ENCODE measurements at regions of chr21 and their contacts with region 1.

Region 1: GRCh38 chr21:29849735-29850176 is 90.0 kb downstream of the GRIK1 start:
- DNase-seq: peak in 8 of 9 experiments; percentile 3 to 55 (median 23)
- ATAC-seq: peak; percentile 90
- H3K4me3 ChIP-seq: no peak overlapping the region
- H3K4me3 Mint-ChIP-seq: no peak overlapping the region
- H3K27ac ChIP-seq: no peak overlapping the region
- H3K27ac Mint-ChIP-seq: no peak overlapping the region
- H3K4me1 ChIP-seq: no peaks in the 10 kb centered on the region
- H3K4me1 Mint-ChIP-seq: no peaks in the 10 kb centered on the region
- H3K27me3 ChIP-seq: no peaks in the 10 kb centered on the region
- H3K27me3 Mint-ChIP-seq: peaks cover 11% of the 10 kb centered on the region
- CTCF ChIP-seq: peak; percentile 67

Region 2: DNA sequence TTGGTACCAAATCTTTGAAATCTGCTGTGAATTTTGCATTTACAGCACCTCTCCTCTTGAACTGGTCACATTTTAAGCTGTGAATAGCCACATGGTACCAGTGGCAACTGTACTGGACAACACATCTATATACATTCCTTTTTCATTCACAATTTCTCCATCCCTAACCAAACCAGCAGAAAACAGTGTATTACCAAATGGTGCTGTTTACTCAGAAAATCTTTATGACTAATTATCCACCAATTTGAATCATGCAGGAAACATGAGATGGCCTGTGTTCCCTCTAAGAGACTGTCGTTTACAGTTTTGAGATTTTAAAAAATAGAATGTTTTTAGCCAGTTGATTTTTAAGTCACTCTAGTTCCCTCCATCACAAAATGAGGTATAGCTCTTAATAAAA is 758.7 kb before region 1 on chr21:
- CTCF ChIA-PET with region 1: interaction called, 9 read pairs
- POLR2A ChIA-PET with region 1: no interaction called
- intact Hi-C with region 1: loop called (anchors 1 kb)
- DNase-seq: no peak
- ATAC-seq: no peak
- H3K4me3 ChIP-seq: no peak overlapping the region
- H3K4me3 Mint-ChIP-seq: no peak overlapping the region
- H3K27ac ChIP-seq: no peak overlapping the region
- H3K27ac Mint-ChIP-seq: no peak overlapping the region
- H3K4me1 ChIP-seq: no peaks in the 10 kb centered on the region
- H3K4me1 Mint-ChIP-seq: no peaks in the 10 kb centered on the region
- H3K27me3 ChIP-seq: no peaks in the 10 kb centered on the region
- H3K27me3 Mint-ChIP-seq: no peaks in the 10 kb centered on the region
- CTCF ChIP-seq: no peak

Region 3: DNA sequence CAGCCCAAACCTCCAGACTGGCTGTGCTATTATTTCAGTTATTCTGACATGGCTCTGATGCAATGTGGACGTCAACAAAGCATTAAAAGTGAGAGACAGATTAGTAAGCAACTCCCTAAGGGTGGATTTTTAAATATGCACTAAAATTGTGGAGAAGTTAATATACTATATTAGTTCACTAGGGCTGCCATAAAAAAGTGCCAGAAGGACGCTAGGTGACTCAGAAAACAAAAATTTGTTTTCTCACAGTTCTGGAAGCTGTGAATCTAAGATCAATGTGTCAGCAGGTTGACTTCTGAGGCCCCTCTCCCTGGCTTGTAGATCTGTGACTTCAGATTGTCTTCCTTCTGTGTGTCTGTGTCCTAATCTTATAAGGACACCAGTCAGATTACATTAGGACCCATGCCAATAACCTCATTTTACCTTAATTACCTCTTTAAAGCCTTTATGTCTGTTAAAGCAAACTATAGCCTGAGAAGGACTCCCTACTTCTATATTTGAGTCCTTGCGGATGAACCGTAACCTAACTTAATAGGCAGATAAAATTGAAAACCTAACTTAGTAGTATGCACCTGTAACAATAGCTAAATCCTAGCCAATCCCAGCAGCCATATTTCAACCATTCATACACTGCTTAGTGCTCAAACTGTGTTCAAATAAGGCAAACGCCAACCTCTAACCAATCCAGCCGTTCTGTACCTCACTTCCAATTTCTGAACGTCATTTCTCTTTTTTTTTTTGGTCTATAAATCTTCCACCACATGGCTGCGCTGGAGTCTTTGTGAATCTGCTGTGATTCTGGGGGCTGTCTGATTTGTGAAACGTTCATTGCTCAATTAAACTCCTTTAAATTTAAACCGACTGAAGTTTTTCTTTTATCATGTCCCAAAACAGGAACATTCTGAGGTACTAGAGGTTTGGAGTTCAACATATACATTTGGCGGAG is 616.9 kb before region 1 on chr21:
- CTCF ChIA-PET with region 1: no interaction called
- POLR2A ChIA-PET with region 1: no interaction called
- intact Hi-C with region 1: loop called in 1 of 2 experiments (anchors 1 kb)
- DNase-seq: peak in 2 of 9 experiments; percentile 15 to 33
- ATAC-seq: no peak
- H3K4me3 ChIP-seq: no peak overlapping the region
- H3K4me3 Mint-ChIP-seq: no peak overlapping the region
- H3K27ac ChIP-seq: no peak overlapping the region
- H3K27ac Mint-ChIP-seq: no peak overlapping the region
- H3K4me1 ChIP-seq: no peaks in the 10 kb centered on the region
- H3K4me1 Mint-ChIP-seq: peaks cover 9% of the 10 kb centered on the region
- H3K27me3 ChIP-seq: no peaks in the 10 kb centered on the region
- H3K27me3 Mint-ChIP-seq: no peaks in the 10 kb centered on the region
- CTCF ChIP-seq: no peak

Region 4: GRCh38 chr21:29351691-29352090 is 498.1 kb before region 1 on chr21:
- CTCF ChIA-PET with region 1: interaction called, 3 read pairs
- POLR2A ChIA-PET with region 1: no interaction called
- intact Hi-C with region 1: loop called in 1 of 2 experiments (anchors 5 kb)
- DNase-seq: no peak
- ATAC-seq: no peak
- H3K4me3 ChIP-seq: no peak overlapping the region
- H3K4me3 Mint-ChIP-seq: no peak overlapping the region
- H3K27ac ChIP-seq: no peak overlapping the region
- H3K27ac Mint-ChIP-seq: no peak overlapping the region
- H3K4me1 ChIP-seq: peaks cover 8% of the 10 kb centered on the region
- H3K4me1 Mint-ChIP-seq: peaks cover 13% of the 10 kb centered on the region
- H3K27me3 ChIP-seq: no peaks in the 10 kb centered on the region
- H3K27me3 Mint-ChIP-seq: no peaks in the 10 kb centered on the region
- CTCF ChIP-seq: no peak

Region 5: DNA sequence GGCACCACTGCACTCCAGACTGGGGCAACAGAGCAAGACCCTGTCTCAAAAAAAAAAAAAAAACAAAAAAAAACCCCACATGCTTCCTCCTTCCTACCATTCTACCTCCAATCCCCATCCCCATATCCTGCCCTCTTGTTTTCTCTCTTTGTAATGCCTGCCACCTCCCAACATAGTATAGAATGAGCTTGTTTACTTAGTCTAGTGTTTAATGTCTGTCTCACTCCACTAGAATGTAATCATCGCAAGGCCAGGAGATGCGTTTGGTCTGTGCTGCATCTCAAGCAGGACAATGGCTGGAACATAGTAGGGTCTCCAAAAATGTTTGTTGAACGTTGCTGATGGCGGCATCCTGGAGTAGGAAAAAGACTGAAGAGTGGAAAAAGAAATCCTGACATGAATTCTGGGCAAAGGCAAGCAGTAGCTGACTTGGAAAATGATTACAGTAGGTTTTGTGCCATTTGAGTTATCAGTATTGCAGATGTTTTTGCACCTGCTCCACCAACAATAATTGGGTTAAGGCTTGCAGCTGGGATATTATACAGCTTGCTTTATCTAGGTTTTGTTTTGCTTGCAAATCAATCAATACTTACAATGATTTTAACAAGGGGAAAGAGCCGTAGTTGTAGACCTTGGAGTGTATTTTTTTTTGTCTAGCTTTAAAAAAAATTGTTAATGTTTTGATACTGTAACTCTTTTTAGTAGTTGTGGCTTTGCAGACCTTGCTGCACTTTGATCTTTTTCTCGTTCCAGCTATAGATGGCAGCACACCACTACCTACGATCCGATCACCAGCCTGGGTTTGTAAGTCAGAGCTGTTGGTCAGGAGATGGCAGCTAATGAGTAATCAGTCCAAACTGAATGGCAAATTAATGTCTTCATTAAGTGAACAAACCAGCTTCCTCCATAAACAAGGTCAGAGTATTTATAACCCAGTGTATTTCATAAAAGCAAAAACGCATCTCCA is 488.7 kb before region 1 on chr21:
- CTCF ChIA-PET with region 1: interaction called, 43 read pairs
- POLR2A ChIA-PET with region 1: interaction called, 3 read pairs
- intact Hi-C with region 1: loop called (anchors 1 kb)
- DNase-seq: peak in 2 of 9 experiments; percentile 18 to 40
- ATAC-seq: no peak
- H3K4me3 ChIP-seq: no peak overlapping the region
- H3K4me3 Mint-ChIP-seq: no peak overlapping the region
- H3K27ac ChIP-seq: no peak overlapping the region
- H3K27ac Mint-ChIP-seq: peak overlapping the region; percentile 11
- H3K4me1 ChIP-seq: no peaks in the 10 kb centered on the region
- H3K4me1 Mint-ChIP-seq: peaks cover 18% of the 10 kb centered on the region
- H3K27me3 ChIP-seq: no peaks in the 10 kb centered on the region
- H3K27me3 Mint-ChIP-seq: no peaks in the 10 kb centered on the region
- CTCF ChIP-seq: peak; percentile 38

Measured in CD8-positive, alpha-beta T cell (primary cell).